CD14-positive monocyte (primary cell): ENCODE measurements at regions of chr10 and their contacts with region 1.

Region 1: GRCh38 chr10:13776861-13777311 is 190.1 kb downstream of the PRPF18 start:
- DNase-seq: peak in 2 of 3 donors; percentile 26 to 57
- H3K4me3 ChIP-seq: no peak overlapping the region
- H3K4me3 Mint-ChIP-seq: no peak overlapping the region
- H3K27ac ChIP-seq: no peak overlapping the region
- H3K27ac Mint-ChIP-seq: peak overlapping the region in 1 of 7 donors; percentile 79
- H3K4me1 ChIP-seq: peaks cover 0 to 6% of the 10 kb centered on the region in 2 donors
- H3K4me1 Mint-ChIP-seq: peaks cover 11% of the 10 kb centered on the region
- H3K27me3 ChIP-seq: no peaks in the 10 kb centered on the region
- H3K27me3 Mint-ChIP-seq: peaks cover 5 to 9% (median 8%) of the 10 kb centered on the region in 3 donors
- CTCF ChIP-seq: no peak

Region 2: GRCh38 chr10:13371897-13372470 is 404.9 kb before region 1 on chr10:
- intact Hi-C with region 1: loop called (anchors 5 to 10 kb)
- DNase-seq: peak; percentile 47 to 69 (median 57)
- H3K4me3 ChIP-seq: no peak overlapping the region
- H3K4me3 Mint-ChIP-seq: no peak overlapping the region
- H3K27ac ChIP-seq: no peak overlapping the region
- H3K27ac Mint-ChIP-seq: no peak overlapping the region
- H3K4me1 ChIP-seq: no peaks in the 10 kb centered on the region
- H3K4me1 Mint-ChIP-seq: no peaks in the 10 kb centered on the region
- H3K27me3 ChIP-seq: no peaks in the 10 kb centered on the region
- H3K27me3 Mint-ChIP-seq: peaks cover 2 to 11% (median 6%) of the 10 kb centered on the region in 3 donors
- CTCF ChIP-seq: peak; percentile 89

Region 3: GRCh38 chr10:13659897-13660550 is 116.9 kb before region 1 on chr10:
- intact Hi-C with region 1: loop called (anchors 1 to 2 kb)
- DNase-seq: peak; percentile 52 to 69 (median 59)
- H3K4me3 ChIP-seq: no peak overlapping the region
- H3K4me3 Mint-ChIP-seq: peak overlapping the region in 1 of 2 donors; percentile 26
- H3K27ac ChIP-seq: no peak overlapping the region
- H3K27ac Mint-ChIP-seq: no peak overlapping the region
- H3K4me1 ChIP-seq: peaks cover 11 to 13% of the 10 kb centered on the region in 2 donors
- H3K4me1 Mint-ChIP-seq: peaks cover 24% of the 10 kb centered on the region
- H3K27me3 ChIP-seq: no peaks in the 10 kb centered on the region
- H3K27me3 Mint-ChIP-seq: peaks cover 3 to 12% (median 6%) of the 10 kb centered on the region in 3 donors
- CTCF ChIP-seq: peak; percentile 91

Region 4: GRCh38 chr10:13732465-13732881 is 44.4 kb before region 1 on chr10:
- intact Hi-C with region 1: no loop called
- DNase-seq: no peak
- H3K4me3 ChIP-seq: no peak overlapping the region
- H3K4me3 Mint-ChIP-seq: no peak overlapping the region
- H3K27ac ChIP-seq: no peak overlapping the region
- H3K27ac Mint-ChIP-seq: no peak overlapping the region
- H3K4me1 ChIP-seq: no peaks in the 10 kb centered on the region
- H3K4me1 Mint-ChIP-seq: peaks cover 4% of the 10 kb centered on the region
- H3K27me3 ChIP-seq: no peaks in the 10 kb centered on the region
- H3K27me3 Mint-ChIP-seq: peaks cover 2 to 11% (median 6%) of the 10 kb centered on the region in 3 donors
- CTCF ChIP-seq: no peak